Activated T-helper 1 cell treated with anti-CD3 and anti-CD28 coated beads, Interleukin-12 subunit alpha, Interleukin-12 subunit beta, Interleukin-2, Interleukin-4 antibody, amounts not matched to agents 30 ng/mL and 10 ng/mL and 1 ng/mL, durations not matched to agents 14 hours and 24 hours and 36 hours (primary cell): ENCODE measurements at regions of chr11 and their contacts with region 1.

Region 1: GRCh38 chr11:9314291-9315036 is at the start of gene TMEM41B:
- DNase-seq: peak; percentile 98
- H3K4me3 Mint-ChIP-seq: peak within 1 kb of the TSS; percentile 99
- H3K27ac Mint-ChIP-seq: peak within 1 kb of the TSS; percentile 97
- H3K4me1 Mint-ChIP-seq: peaks cover 37% of the 10 kb centered on the region
- H3K27me3 Mint-ChIP-seq: peaks cover 11% of the 10 kb centered on the region
- total RNA-seq, gene TMEM41B: 26.1 and 28.8 TPM in 2 replicates

Region 2: GRCh38 chr11:8964324-8965320 is 349.8 kb before region 1 on chr11 and contains the start of gene TMEM9B:
- intact Hi-C with region 1: loop called (anchors 1 kb)
- DNase-seq: peak; percentile 79
- H3K4me3 Mint-ChIP-seq: peak within 1 kb of the TSS; percentile 99
- H3K27ac Mint-ChIP-seq: peak within 1 kb of the TSS; percentile 95
- H3K4me1 Mint-ChIP-seq: peaks cover 31% of the 10 kb centered on the region
- H3K27me3 Mint-ChIP-seq: no peaks in the 10 kb centered on the region
- total RNA-seq, gene TMEM9B: 27.0 and 31.3 TPM in 2 replicates

Region 3: GRCh38 chr11:9210922-9211320 is 103.5 kb before region 1 on chr11:
- intact Hi-C with region 1: loop called (anchors 2 kb)
- DNase-seq: no peak
- H3K4me3 Mint-ChIP-seq: peak overlapping the region; percentile 41
- H3K27ac Mint-ChIP-seq: peak overlapping the region; percentile 21
- H3K4me1 Mint-ChIP-seq: peaks cover 63% of the 10 kb centered on the region
- H3K27me3 Mint-ChIP-seq: peaks cover 2% of the 10 kb centered on the region

Region 4: DNA sequence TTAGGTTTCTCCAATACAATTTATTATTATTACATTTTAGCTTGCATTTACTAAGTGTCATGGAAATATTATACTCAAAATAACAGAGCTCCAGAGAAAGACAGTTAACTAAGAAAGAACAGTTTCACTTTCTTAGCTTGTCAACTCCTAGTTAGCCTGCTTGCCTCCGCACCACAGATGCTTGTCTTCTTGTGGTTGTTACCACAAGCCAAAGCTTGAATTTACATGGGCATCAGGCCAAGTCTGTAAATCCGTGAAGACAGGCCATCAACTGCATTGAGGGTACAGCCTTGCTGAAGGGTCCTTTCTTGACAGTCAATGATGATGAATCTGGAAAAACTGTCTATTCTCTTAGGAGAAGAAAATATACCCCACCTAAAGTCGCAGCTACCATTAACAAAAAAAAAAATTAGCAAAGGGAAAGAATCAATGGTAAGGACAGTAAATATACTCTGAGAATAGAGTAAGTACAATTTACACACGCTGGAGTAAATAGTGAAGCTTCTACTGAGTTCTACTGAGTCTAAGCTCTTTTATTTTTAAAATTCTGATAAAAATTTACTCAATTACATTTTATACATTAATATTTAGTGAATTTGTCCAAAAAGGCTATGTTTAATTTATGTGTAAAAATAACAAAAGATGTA is 33.7 kb before region 1 on chr11:
- intact Hi-C with region 1: loop called (anchors 1 kb)
- DNase-seq: peak; percentile 64
- H3K4me3 Mint-ChIP-seq: peak overlapping the region; percentile 60
- H3K27ac Mint-ChIP-seq: peak overlapping the region; percentile 57
- H3K4me1 Mint-ChIP-seq: peaks cover 15% of the 10 kb centered on the region
- H3K27me3 Mint-ChIP-seq: peaks cover 6% of the 10 kb centered on the region

Region 5: GRCh38 chr11:9293646-9294045 is 20.8 kb before region 1 on chr11:
- intact Hi-C with region 1: no loop called
- DNase-seq: no peak
- H3K4me3 Mint-ChIP-seq: no peak overlapping the region
- H3K27ac Mint-ChIP-seq: no peak overlapping the region
- H3K4me1 Mint-ChIP-seq: peaks cover 11% of the 10 kb centered on the region
- H3K27me3 Mint-ChIP-seq: no peaks in the 10 kb centered on the region

Region 6: GRCh38 chr11:9384535-9385303 is 70.3 kb after region 1 on chr11 and contains the start of gene IPO7:
- intact Hi-C with region 1: loop called (anchors 1 kb)
- DNase-seq: peak; percentile 87
- H3K4me3 Mint-ChIP-seq: peak within 1 kb of the TSS; percentile 96
- H3K27ac Mint-ChIP-seq: peak within 1 kb of the TSS; percentile 95
- H3K4me1 Mint-ChIP-seq: peaks cover 36% of the 10 kb centered on the region
- H3K27me3 Mint-ChIP-seq: no peaks in the 10 kb centered on the region
- total RNA-seq, gene IPO7: 136 and 153 TPM in 2 replicates

Region 7: DNA sequence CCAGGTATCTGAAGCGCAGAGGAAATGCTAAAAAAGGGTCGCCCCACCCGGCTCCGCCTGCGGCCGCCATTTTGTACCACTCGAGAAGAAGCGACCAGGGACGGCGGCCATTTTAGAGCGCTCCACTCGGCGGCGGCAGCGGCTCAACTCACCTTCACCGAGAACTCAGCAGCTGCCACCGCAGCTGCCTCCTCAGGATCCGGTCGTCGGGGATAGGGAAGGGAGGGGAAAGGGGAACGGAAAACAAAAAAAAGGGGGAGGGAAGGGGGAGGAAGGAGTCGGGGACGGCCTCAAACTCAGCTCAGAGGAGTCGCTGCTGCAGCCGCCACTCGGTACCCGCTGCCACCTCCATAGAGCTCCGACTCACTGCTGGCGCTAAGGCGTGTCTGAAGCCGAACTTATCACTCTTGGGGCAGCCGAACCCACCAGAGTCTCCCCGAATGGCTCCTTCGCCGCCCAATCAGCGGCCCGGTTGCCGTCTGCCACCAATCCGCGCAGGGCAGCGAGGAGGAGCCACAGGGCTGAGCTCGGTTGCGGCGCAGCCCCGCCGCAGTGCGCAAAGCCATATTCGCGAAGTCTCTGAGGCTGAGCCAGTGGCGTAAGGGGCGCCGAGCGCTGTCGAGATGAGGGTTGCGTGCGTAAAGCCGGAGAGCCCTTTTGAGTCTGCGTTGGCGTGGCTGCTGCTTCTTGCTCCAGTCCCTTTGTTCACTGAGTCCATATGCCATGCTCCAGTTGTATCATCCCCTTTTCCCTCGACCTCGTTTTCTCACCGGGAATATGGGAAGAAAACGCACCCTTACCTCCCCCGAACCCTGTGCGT is 1494.3 kb after region 1 on chr11 and contains the start of gene EIF4G2:
- intact Hi-C with region 1: loop called (anchors 2 kb)
- DNase-seq: peak; percentile 98
- H3K4me3 Mint-ChIP-seq: peak within 1 kb of the TSS; percentile 95
- H3K27ac Mint-ChIP-seq: peak within 1 kb of the TSS; percentile 98
- H3K4me1 Mint-ChIP-seq: peaks cover 43% of the 10 kb centered on the region
- H3K27me3 Mint-ChIP-seq: no peaks in the 10 kb centered on the region
- total RNA-seq, gene EIF4G2: 1,084 and 1,108 TPM in 2 replicates